WTC11 (cell line): ENCODE measurements at regions of chr11 and their contacts with region 1.

Region 1: DNA sequence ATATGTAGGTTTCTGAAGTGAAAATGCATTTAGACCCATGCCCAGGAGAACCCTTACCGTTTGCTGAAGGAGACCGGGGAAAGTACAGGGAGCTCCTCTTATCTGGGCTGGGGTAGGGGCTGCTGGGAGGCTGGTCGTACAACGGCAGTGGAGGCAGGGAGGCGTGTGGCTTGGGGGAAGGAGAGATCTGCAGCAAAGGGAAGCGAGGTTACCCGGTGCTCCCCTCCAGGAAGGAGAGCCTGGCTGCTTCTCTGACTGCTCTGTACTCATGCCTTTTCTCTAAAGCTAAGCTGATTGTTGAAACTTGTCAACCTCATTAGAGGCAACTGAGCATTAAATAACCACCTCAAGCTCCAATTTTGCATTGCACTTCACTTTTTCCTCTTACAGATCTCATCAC is 27.2 kb downstream of the ATG16L2 start:
- DNase-seq: no peak
- ATAC-seq: no peak
- H3K4me3 Mint-ChIP-seq: no peak overlapping the region
- H3K27ac Mint-ChIP-seq: no peak overlapping the region
- H3K4me1 Mint-ChIP-seq: no peaks in the 10 kb centered on the region
- H3K27me3 Mint-ChIP-seq: no peaks in the 10 kb centered on the region
- CTCF ChIP-seq: no peak

Region 2: DNA sequence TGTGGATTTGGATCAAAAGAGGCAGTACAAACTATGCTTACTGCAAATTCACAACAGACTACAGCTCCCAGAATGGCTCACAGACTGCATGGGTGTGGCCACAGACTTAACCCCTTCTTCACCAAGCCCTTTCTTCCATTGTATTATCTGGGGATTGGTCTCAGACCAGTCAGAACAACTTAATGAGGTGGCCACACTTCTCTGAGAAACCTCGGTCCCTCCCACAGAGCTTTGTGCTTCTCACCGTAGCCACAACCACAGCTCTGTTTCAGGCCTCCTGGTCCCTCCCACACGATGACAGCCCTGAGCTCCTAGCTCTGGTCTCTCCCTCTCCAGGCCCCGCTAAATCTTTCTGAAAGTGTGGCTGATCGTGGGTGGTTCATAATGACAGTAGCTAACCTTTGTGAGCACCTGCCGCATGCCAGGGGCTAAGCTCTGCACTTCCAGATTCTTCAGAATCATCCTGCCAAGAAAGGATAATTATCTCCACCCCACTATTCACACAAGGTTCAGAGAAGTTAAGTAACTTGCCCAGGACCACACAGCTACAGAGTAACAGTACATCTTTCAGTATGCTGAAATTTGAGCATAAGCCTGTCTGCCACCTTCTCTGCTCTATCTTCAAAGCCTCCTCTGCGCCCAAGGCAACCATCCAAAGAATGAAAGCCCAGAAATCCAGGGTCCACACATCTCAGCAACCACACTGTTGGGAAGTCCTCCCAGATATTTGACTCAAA is 172.6 kb before region 1 on chr11:
- CTCF ChIA-PET with region 1: no interaction called
- POLR2A ChIA-PET with region 1: interaction called, 11 read pairs
- DNase-seq: no peak
- ATAC-seq: no peak
- H3K4me3 Mint-ChIP-seq: no peak overlapping the region
- H3K27ac Mint-ChIP-seq: no peak overlapping the region
- H3K4me1 Mint-ChIP-seq: peaks cover 17% of the 10 kb centered on the region
- H3K27me3 Mint-ChIP-seq: peaks cover 45% of the 10 kb centered on the region
- CTCF ChIP-seq: no peak

Region 3: GRCh38 chr11:72856065-72856464 is 14.7 kb after region 1 on chr11:
- CTCF ChIA-PET with region 1: no interaction called
- POLR2A ChIA-PET with region 1: no interaction called
- DNase-seq: no peak
- ATAC-seq: no peak
- H3K4me3 Mint-ChIP-seq: no peak overlapping the region
- H3K27ac Mint-ChIP-seq: no peak overlapping the region
- H3K4me1 Mint-ChIP-seq: no peaks in the 10 kb centered on the region
- H3K27me3 Mint-ChIP-seq: no peaks in the 10 kb centered on the region
- CTCF ChIP-seq: no peak